ENCODE measurements at regions of chr3 and their contacts with region 1.

Region 1: DNA sequence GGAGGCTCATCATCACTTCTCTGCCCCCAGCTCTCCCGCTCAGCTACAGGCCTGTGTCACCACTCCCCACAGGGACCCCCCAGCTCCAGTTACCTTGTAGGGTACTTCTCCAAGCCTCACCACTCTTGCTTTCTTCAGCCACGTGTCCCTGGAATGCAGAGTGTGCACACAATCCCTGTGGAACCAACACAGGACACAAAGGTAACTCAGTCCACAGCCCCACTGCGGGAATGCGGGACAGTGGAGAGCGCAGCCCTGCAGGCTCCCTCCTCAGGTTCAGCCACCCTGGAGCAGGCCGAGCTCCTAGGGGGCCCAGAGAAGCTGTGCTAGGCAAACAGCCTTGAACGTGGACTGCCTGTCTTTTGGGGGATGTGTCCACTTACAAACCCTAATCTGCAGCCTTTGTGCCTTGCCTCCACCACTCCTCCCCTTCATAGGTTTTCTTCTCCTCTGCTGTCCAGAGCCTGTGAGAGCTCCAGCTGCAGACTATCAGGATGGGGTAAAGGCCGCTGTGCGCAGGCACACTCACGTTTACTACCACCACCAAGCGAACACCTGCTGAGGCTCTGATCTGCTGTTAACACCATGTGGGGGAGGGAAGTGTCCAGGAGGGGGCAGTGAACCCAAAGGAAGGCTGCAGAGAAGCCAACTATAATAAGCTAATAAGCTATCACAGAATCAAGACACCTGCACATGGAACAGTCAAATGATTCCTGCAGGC is 26.0 kb downstream of the XPC start:
- DNase-seq: no peak
- H3K4me3 ChIP-seq: no peak overlapping the region
- H3K27ac ChIP-seq: no peak overlapping the region
- H3K4me1 ChIP-seq: peaks cover 0 to 14% (median 9%) of the 10 kb centered on the region in 4 experiments; a peak in 6 of 7 replicates
- H3K27me3 ChIP-seq: no peaks in the 10 kb centered on the region
- CTCF ChIP-seq: peak; percentile 17 to 33 (median 27); a peak in 2 of 4 replicates
- EP300 ChIP-seq: no peak
- POLR2A ChIP-seq: no peak
- RAD21 ChIP-seq: peak in 1 of 2 experiments; percentile 33; a peak in 2 of 4 replicates

Region 2: DNA sequence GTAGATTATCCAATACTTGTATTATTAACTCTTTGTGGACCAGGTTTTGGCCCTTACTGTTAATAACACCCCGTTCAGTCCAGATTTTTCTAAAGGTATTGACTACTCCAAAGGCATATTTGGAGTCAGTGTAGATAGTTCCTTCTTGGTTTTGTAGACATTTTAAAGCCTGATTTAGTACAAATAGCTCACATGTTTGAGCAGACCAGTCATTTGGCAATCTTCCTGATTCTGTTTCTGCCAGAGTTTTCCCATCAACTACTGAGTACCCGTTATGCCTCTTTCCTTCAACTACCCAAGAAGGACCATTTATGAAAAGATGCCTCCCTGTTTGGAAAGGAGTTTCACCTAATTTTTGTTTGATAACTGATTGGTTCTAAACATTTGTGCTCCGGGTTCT is 109.7 kb before region 1 on chr3:
- CTCF ChIA-PET with region 1: no interaction called
- POLR2A ChIA-PET with region 1: no interaction called
- DNase-seq: no peak
- H3K4me3 ChIP-seq: no peak overlapping the region
- H3K27ac ChIP-seq: no peak overlapping the region
- H3K4me1 ChIP-seq: no peaks in the 10 kb centered on the region
- H3K27me3 ChIP-seq: no peaks in the 10 kb centered on the region
- CTCF ChIP-seq: no peak
- EP300 ChIP-seq: no peak
- POLR2A ChIP-seq: no peak
- RAD21 ChIP-seq: no peak

Region 3: DNA sequence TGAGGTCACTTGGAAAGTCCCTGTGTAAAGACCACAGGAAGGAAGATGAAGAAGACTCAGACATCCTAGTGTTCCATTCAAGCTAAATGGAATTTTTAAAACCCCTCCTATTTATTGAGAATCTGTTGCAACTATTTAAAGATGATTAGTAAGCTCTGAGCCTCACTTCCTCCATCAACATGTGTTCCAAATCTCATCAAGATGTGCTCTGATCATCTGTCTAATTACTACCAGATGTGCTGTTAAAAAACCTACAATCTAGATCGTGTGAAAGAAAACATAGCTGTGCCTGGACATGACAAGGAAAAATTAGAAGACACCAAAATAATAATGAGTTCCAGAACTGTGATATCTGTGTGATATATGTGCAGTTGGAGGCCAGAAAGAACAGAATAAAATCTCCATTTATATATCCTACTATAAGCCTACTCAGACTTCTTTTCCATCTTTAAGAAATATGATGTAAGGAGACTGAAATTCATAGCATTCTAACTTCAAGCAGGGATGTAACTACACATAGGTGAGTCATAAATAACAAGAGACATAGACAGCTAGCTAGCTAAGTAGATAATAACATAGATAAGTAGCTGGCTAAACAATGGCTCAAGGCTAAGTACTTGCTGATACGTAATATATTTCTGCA is 18.2 kb after region 1 on chr3:
- CTCF ChIA-PET with region 1: interaction called, 14 read pairs
- POLR2A ChIA-PET with region 1: interaction called, 3 read pairs
- DNase-seq: no peak
- H3K4me3 ChIP-seq: no peak overlapping the region
- H3K27ac ChIP-seq: no peak overlapping the region
- H3K4me1 ChIP-seq: no peaks in the 10 kb centered on the region
- H3K27me3 ChIP-seq: no peaks in the 10 kb centered on the region
- CTCF ChIP-seq: no peak
- EP300 ChIP-seq: no peak
- POLR2A ChIP-seq: no peak
- RAD21 ChIP-seq: no peak